Head of caudate nucleus (tissue), 42 donors: ENCODE measurements at regions of chr17 and their contacts with region 1.

Region 1: DNA sequence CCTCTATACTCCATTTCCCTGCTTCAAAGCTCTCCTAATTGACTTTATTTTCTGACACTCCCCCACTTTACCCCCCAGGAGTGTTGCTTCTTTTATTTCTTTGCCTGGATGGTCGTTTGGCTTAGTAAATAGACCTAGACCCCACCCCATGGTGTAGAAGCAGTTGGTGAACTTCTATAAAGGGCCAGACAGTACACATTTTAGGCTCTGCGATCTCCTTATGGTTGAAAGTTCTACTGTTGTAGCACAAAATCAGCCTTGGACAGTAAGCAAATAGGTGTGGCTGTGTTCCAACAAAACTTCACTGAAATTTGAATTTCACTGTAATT is 31.9 kb downstream of the ZNF287 start:
- DNase-seq: no peak

Region 2: DNA sequence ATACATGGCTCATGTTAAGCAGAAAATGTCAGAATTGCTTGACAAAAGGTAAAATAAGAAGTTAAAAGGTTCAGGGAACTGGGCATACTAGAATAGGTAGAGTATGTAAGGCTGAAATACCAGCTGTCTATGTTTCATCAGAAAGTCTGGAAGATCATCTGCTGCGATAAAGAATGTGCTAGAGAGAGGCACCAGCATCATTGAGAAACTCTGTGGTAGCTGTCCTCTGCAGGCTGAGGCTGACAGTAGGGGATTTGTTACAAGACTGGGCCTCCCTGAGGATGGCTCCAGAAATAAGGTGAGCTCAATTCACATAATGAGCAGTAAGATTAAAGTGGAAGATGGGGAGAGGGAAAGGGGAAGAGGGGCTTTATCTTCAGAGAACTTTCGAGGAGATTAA is 36.4 kb after region 1 on chr17:
- intact Hi-C with region 1: loop called (anchors 5 kb)
- DNase-seq: no peak

Region 3: DNA sequence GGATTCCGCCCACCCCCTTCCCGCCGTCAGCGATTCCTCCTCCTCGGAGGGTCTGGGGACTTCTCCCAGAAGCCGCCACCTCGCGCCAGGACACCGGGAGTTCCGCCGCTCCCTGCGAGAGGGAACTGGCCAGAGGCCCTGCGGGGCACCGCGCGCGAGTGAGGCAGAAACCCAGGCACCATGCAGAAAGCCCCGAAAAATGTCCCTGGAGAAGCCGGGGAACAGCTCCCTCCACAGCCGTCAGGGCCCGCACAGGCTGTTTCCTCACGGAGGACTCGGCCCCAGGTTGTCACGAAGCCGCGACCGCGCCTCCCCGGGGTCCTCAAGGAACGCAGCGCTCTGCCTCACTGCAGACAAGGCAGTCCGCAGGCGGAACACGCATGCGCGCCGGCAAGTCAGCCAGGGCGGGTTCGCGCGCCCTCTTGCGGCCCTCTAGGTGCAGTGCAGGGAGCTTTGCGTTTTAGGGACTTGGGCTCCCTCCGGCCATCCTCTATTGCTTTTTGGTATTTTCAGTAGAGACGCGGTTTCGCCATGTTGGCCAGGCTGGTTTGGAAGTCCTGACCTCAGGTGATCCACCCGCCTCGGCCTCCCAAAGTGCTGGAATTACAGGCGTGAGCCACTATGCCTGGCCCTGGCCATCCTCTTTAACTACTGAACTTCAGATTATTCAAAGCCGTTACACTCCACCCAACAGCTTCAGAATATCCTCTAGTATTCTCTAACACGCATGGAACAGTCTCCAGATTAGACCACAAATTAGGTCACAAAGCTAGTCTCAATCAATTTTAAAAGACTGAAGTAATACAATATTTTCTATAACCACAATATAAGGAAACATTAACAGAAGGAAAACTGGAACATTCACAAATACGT is 52.2 kb after region 1 on chr17:
- intact Hi-C with region 1: loop called (anchors 5 kb)
- DNase-seq: peak; percentile 84 to 97 (median 93)